BJ (cell line): ENCODE measurements at regions of chr3 and their contacts with region 1.

Region 1: DNA sequence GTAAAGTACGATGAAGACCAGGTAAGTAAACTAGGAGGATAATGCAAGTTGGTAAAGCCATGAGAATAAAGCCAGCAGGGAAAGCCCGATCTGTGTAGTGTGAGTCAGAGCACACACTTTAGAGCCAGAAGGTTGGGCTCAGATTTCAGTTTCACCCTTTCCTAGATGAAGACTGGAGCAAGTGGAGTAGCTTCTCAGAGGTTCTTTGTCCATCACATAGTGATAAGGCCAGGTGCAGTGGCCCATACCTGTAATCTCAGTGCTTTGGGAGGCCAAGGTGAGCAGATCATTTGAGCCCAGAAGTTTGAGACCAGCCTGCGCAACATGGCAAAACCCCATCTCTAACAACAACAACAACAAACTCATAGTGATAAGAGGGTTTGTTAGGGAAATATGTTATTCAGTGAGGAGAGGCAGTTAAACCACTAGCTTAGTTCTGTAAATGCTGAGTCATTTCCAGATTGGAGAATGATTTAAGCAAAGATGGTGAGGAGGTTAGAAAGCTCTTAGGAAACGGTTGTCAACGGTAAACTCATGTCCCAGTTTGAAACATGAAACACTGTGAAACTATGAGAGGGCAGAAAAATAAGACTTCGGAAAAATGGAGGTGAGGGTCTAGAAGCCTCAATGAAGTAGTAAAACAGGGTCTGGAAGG is 39.0 kb downstream of the IL12A start:
- DNase-seq: peak; percentile 20
- H3K4me3 ChIP-seq: no peak overlapping the region
- H3K27me3 ChIP-seq: no peaks in the 10 kb centered on the region
- CTCF ChIP-seq: no peak

Region 2: GRCh38 chr3:159884661-159885402 is 142.8 kb before region 1 on chr3:
- CTCF ChIA-PET with region 1: interaction called, 11 read pairs
- POLR2A ChIA-PET with region 1: no interaction called
- DNase-seq: no peak
- H3K4me3 ChIP-seq: no peak overlapping the region
- H3K27me3 ChIP-seq: no peaks in the 10 kb centered on the region
- CTCF ChIP-seq: peak; percentile 48

Region 3: DNA sequence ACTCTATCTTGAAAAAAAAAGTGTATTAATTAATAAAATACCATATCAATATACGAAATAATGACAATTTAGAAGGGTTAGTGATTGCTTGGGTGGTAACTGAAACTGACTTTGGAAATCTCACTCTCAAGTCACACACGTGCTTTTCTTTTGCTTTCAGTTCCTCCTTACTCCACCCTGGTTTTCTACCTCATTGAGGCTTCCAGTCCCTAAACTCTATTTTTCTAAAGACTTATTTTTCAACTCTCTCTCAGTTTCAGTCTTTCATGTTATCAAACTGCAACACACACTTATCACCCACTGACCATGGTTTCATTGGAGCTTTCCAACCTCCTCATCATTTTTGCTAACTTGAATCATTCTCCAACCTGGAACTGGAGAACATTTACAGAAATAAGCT is 15.6 kb before region 1 on chr3:
- CTCF ChIA-PET with region 1: interaction called, 12 read pairs
- POLR2A ChIA-PET with region 1: no interaction called
- DNase-seq: no peak
- H3K4me3 ChIP-seq: no peak overlapping the region
- H3K27me3 ChIP-seq: no peaks in the 10 kb centered on the region; the same call in 1 of the 2 replicates
- CTCF ChIP-seq: no peak

Region 4: GRCh38 chr3:160041465-160041864 is 13.8 kb after region 1 on chr3:
- CTCF ChIA-PET with region 1: interaction called, 10 read pairs
- POLR2A ChIA-PET with region 1: no interaction called
- DNase-seq: no peak
- H3K4me3 ChIP-seq: no peak overlapping the region
- H3K27me3 ChIP-seq: peaks cover 23% of the 10 kb centered on the region
- CTCF ChIP-seq: no peak

Region 5: GRCh38 chr3:160049565-160049964 is 21.9 kb after region 1 on chr3:
- CTCF ChIA-PET with region 1: interaction called, 10 read pairs
- POLR2A ChIA-PET with region 1: no interaction called
- DNase-seq: no peak
- H3K4me3 ChIP-seq: no peak overlapping the region
- H3K27me3 ChIP-seq: no peaks in the 10 kb centered on the region; the same call in none of the 2 replicates
- CTCF ChIP-seq: no peak

Region 6: GRCh38 chr3:160296591-160296990 is 268.9 kb after region 1 on chr3:
- CTCF ChIA-PET with region 1: no interaction called
- POLR2A ChIA-PET with region 1: no interaction called
- DNase-seq: no peak
- H3K4me3 ChIP-seq: no peak overlapping the region
- H3K27me3 ChIP-seq: no peaks in the 10 kb centered on the region
- CTCF ChIP-seq: no peak